Heart right ventricle (tissue), 16 donors: ENCODE measurements at regions of chr18 and their contacts with region 1.

Region 1: GRCh38 chr18:34077599-34077998 is 147.1 kb downstream of the NOL4 start:
- DNase-seq: no peak
- ATAC-seq: no peak
- H3K4me3 ChIP-seq: no peak overlapping the region
- H3K27ac ChIP-seq: no peak overlapping the region
- H3K4me1 ChIP-seq: no peaks in the 10 kb centered on the region
- H3K27me3 ChIP-seq: no peaks in the 10 kb centered on the region
- CTCF ChIP-seq: no peak

Region 2: GRCh38 chr18:34018336-34018735 is 59.3 kb before region 1 on chr18:
- intact Hi-C with region 1: loop called in 1 of 10 experiments (anchors 10 kb)
- DNase-seq: no peak
- ATAC-seq: no peak
- H3K4me3 ChIP-seq: no peak overlapping the region
- H3K27ac ChIP-seq: no peak overlapping the region
- H3K4me1 ChIP-seq: no peaks in the 10 kb centered on the region
- H3K27me3 ChIP-seq: no peaks in the 10 kb centered on the region
- CTCF ChIP-seq: no peak

Region 3: DNA sequence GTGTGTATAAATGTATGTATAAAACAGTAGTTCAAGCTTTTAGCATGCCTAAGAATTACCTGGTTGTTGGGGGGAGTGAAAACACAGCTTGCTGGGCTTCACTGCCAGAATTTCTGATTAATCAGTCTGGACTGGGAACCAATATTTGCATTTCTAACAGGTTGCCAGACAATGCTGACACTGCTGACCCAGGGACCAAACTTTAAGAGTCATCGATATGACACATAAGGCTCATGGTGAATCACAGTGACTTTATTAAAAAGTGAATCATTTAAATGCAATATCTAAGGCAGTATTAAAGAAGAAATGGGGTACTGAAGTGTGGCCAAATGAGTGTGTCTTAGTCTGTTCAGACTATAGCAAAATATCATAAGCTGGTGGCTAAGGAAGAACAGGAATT is 436.6 kb after region 1 on chr18:
- intact Hi-C with region 1: no loop called
- DNase-seq: no peak
- ATAC-seq: no peak
- H3K4me3 ChIP-seq: no peak overlapping the region
- H3K27ac ChIP-seq: no peak overlapping the region
- H3K4me1 ChIP-seq: peaks cover 0 to 30% (median 14%) of the 10 kb centered on the region in 9 donors
- H3K27me3 ChIP-seq: no peaks in the 10 kb centered on the region
- CTCF ChIP-seq: no peak